OCI-LY7 (cell line): ENCODE measurements at regions of chr4 and their contacts with region 1.

Region 1: GRCh38 chr4:80521438-80521837 is 185.9 kb downstream of the CFAP299 start:
- DNase-seq: peak; percentile 63
- H3K4me3 ChIP-seq: no peak overlapping the region
- H3K27ac ChIP-seq: no peak overlapping the region
- H3K4me1 ChIP-seq: peaks cover 16% of the 10 kb centered on the region
- CTCF ChIP-seq: no peak

Region 2: GRCh38 chr4:80507507-80507906 is 13.9 kb before region 1 on chr4:
- CTCF ChIA-PET with region 1: no interaction called
- POLR2A ChIA-PET with region 1: interaction called, 11 read pairs
- intact Hi-C with region 1: no loop called
- DNase-seq: peak; percentile 85
- H3K4me3 ChIP-seq: no peak overlapping the region
- H3K27ac ChIP-seq: peak overlapping the region; percentile 55
- H3K4me1 ChIP-seq: peaks cover 37% of the 10 kb centered on the region
- CTCF ChIP-seq: no peak

Region 3: GRCh38 chr4:80685214-80685613 is 163.8 kb after region 1 on chr4:
- CTCF ChIA-PET with region 1: no interaction called
- POLR2A ChIA-PET with region 1: no interaction called
- intact Hi-C with region 1: no loop called
- DNase-seq: peak; percentile 61
- H3K4me3 ChIP-seq: no peak overlapping the region
- H3K27ac ChIP-seq: peak overlapping the region; percentile 5
- H3K4me1 ChIP-seq: peaks cover 13% of the 10 kb centered on the region
- CTCF ChIP-seq: no peak